ENCODE measurements at regions of chr7 and their contacts with region 1.

Region 1: GRCh38 chr7:154913638-154914312 is 89.1 kb downstream of the PAXIP1 start:
- DNase-seq: peak; percentile 88
- ATAC-seq: peak; percentile 99
- H3K4me3 Mint-ChIP-seq: peak overlapping the region; percentile 55
- H3K27ac Mint-ChIP-seq: no peak overlapping the region
- H3K4me1 Mint-ChIP-seq: peaks cover 4% of the 10 kb centered on the region
- H3K27me3 Mint-ChIP-seq: peaks cover 8% of the 10 kb centered on the region

Region 2: GRCh38 chr7:154777023-154777422 is 136.8 kb before region 1 on chr7:
- CTCF ChIA-PET with region 1: no interaction called
- POLR2A ChIA-PET with region 1: no interaction called
- DNase-seq: no peak
- ATAC-seq: no peak
- H3K4me3 Mint-ChIP-seq: no peak overlapping the region
- H3K27ac Mint-ChIP-seq: no peak overlapping the region
- H3K4me1 Mint-ChIP-seq: peaks cover 10% of the 10 kb centered on the region
- H3K27me3 Mint-ChIP-seq: no peaks in the 10 kb centered on the region

Region 3: GRCh38 chr7:154978017-154978416 is 64.2 kb after region 1 on chr7:
- CTCF ChIA-PET with region 1: interaction called, 10 read pairs
- POLR2A ChIA-PET with region 1: no interaction called
- DNase-seq: no peak
- ATAC-seq: no peak
- H3K4me3 Mint-ChIP-seq: no peak overlapping the region
- H3K27ac Mint-ChIP-seq: no peak overlapping the region
- H3K4me1 Mint-ChIP-seq: peaks cover 25% of the 10 kb centered on the region
- H3K27me3 Mint-ChIP-seq: no peaks in the 10 kb centered on the region

Measured in activated CD8-positive, alpha-beta T cell treated with anti-CD3 and anti-CD28 coated beads, Interleukin-2, amount 10 ng/mL, durations not matched to agents 7 days and 5 days (primary cell).